ENCODE measurements at regions of chr19 and their contacts with region 1.

Region 1: DNA sequence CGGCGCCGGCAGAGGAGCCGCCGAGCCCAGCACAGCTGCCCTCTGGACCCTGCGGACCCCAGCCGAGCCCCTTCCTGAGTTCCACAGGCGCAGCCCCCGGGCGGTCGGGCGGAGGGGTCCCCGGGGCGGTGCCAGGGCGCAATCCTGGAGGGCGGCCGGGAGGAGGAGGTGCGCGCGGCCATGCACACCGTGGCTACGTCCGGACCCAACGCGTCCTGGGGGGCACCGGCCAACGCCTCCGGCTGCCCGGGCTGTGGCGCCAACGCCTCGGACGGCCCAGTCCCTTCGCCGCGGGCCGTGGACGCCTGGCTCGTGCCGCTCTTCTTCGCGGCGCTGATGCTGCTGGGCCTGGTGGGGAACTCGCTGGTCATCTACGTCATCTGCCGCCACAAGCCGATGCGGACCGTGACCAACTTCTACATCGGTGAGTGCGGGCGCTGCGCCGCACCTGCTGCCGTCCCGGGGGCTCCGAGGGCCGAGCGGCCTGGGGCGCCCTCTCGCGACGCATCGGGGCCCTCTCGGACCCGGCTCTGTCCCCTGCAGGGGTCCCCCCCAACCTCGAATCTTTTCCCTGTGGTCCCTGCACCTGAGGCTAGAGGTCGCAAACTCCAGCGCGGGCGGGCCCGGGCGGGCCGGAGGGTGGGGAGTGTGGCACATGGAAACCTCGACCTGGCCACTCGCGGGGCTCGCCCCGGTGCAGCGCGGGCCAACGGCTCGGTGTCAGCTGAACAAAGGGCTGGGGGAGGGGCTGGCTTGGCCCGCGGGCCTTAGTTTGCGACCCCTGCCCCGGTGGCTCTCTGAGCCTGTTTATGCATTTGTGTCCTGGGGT is at the start of gene KISS1R:
- DNase-seq: no peak
- ATAC-seq: peak in 3 of 4 donors; percentile 3 to 14 (median 8)
- H3K4me3 ChIP-seq: peak within 1 kb of the TSS in 1 of 3 donors; percentile 7
- H3K27ac ChIP-seq: no peak within 1 kb of the TSS
- H3K4me1 ChIP-seq: peaks cover 0 to 21% (median 0%) of the 10 kb centered on the region in 4 donors
- H3K27me3 ChIP-seq: peaks cover 10 to 41% of the 10 kb centered on the region in 2 donors
- CTCF ChIP-seq: peak; percentile 29 to 56 (median 38)
- POLR2A ChIP-seq: no peak
- total RNA-seq, gene KISS1R: 0.47 TPM in 1 of 6 experiments, not detected in the others

Region 2: DNA sequence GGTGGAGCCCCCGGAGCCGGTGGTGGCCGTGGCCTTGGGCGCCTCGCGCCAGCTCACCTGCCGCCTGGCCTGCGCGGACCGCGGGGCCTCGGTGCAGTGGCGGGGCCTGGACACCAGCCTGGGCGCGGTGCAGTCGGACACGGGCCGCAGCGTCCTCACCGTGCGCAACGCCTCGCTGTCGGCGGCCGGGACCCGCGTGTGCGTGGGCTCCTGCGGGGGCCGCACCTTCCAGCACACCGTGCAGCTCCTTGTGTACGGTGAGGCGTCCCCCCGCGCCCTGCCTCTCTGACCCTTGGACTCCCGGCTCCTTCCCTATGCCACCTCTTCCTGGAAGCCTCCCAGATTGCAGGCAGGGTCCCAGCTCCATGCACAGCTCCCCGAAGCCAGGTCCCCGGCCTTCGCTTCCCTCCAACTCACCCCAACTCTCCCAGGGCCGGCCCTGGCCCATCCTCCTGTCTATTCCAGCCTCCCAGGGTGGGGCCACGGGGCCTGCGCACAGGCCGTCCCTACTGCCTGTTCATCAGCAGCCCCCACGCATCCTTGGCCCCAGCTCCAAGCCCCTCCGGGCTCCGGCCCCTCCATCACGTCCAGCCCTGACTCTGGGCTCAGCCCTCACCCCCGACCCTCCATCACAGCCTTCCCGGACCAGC is 419.6 kb before region 1 on chr19:
- intact Hi-C with region 1: no loop called
- DNase-seq: no peak
- ATAC-seq: peak in 2 of 4 donors; percentile 5 to 25
- H3K4me3 ChIP-seq: no peak overlapping the region
- H3K27ac ChIP-seq: no peak overlapping the region
- H3K4me1 ChIP-seq: no peaks in the 10 kb centered on the region
- H3K27me3 ChIP-seq: no peaks in the 10 kb centered on the region
- CTCF ChIP-seq: no peak
- POLR2A ChIP-seq: no peak

Region 3: DNA sequence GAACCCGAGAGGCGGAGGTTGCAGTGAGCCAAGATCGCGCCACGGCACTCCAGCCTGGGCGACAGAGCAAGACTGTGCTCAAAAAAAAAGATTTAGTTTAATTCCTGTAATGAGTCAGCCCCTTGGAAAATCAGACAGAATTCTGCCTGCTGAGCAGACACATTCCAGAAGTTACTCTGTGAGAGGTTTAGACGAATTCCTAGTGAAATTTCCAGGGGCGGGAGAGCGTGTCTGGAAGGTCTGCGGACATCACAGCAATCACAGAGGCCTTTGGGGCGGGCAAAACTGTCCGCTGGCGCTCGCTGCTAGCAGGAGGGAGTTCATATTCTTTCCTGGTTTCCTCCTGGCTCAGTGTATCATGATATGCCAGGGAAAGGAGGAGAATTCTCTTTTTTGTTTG is 149.1 kb before region 1 on chr19:
- intact Hi-C with region 1: loop called (anchors 5 kb)
- DNase-seq: no peak
- ATAC-seq: no peak
- H3K4me3 ChIP-seq: no peak overlapping the region
- H3K27ac ChIP-seq: no peak overlapping the region
- H3K4me1 ChIP-seq: no peaks in the 10 kb centered on the region
- H3K27me3 ChIP-seq: no peaks in the 10 kb centered on the region
- CTCF ChIP-seq: no peak
- POLR2A ChIP-seq: no peak

Region 4: DNA sequence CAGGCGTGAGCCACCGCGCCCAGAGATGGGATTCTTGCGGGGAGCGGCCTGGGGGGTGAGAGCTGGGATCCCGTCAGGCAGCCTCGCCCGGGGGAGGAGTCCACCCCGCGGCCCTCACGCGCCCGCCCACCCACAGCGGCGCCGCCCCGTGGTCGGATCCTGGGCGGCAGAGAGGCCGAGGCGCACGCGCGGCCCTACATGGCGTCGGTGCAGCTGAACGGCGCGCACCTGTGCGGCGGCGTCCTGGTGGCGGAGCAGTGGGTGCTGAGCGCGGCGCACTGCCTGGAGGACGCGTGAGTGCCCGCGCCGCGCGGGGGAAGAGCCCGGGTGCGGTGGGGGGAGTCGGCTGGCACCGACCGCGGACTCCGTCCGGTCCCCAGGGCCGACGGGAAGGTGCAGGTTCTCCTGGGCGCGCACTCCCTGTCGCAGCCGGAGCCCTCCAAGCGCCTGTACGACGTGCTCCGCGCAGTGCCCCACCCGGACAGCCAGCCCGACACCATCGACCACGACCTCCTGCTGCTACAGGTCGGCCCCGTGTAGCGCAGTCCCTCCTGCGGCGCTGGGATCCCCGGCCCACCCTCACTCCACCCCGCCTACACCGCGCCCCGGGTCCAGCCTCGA is 56.9 kb before region 1 on chr19:
- intact Hi-C with region 1: loop called (anchors 5 kb)
- DNase-seq: peak in 1 of 3 donors; percentile 43
- ATAC-seq: peak; percentile 17 to 39 (median 30)
- H3K4me3 ChIP-seq: peak overlapping the region in 2 of 3 donors; percentile 23 to 24
- H3K27ac ChIP-seq: no peak overlapping the region
- H3K4me1 ChIP-seq: no peaks in the 10 kb centered on the region
- H3K27me3 ChIP-seq: no peaks in the 10 kb centered on the region
- CTCF ChIP-seq: peak in 2 of 4 donors; percentile 10 to 11
- POLR2A ChIP-seq: no peak

Region 5: DNA sequence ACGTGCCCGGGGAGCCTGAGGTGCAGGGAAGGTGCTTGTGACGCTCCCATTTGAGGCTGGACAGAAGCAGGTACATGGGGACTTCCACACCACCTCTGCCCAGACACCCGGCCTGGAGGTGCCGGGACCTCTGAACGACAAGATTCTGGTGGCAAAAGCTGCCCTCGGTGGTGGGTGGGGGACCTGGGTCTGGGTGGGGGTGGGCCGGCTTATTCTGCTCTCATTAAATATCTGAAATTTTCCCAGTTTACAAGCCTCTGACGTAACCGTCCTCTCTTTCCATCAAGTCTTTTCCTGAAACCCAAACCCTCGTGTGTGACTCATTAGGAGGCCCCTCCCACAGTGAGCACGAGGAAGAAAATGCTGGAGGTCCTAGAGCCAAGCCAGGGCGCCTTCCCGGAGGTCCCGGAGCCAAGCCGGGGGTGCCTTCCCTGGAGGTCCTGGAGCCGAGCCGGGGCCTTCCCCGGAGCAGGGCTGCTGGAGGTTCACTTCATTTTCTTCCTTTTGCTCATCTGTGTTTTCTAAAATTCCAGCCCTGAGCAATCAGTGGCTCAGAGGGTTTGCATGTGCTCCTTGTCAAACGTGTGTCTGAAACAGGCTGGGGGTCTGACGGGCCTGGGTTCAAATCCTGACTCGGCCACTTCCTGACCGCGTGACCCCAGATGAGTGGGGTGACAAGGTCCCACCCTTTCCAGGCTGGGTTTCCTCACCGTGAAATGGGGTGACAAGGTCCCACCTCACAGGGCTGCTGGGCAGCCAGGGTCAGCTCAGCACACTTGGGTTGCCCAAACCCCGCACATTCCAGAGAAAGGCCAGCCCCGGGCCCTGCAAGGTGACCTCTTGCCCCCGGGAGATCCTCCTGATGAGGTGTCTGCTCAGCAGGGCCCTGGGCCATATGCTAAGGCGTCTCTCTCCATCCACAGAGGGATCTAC is 48.0 kb before region 1 on chr19:
- intact Hi-C with region 1: loop called (anchors 5 kb)
- DNase-seq: peak in 1 of 3 donors; percentile 29
- ATAC-seq: peak in 1 of 4 donors; percentile 20
- H3K4me3 ChIP-seq: no peak overlapping the region
- H3K27ac ChIP-seq: no peak overlapping the region
- H3K4me1 ChIP-seq: no peaks in the 10 kb centered on the region
- H3K27me3 ChIP-seq: no peaks in the 10 kb centered on the region
- CTCF ChIP-seq: no peak
- POLR2A ChIP-seq: no peak